ENCODE measurements at regions of chrX and their contacts with region 1.

Region 1: DNA sequence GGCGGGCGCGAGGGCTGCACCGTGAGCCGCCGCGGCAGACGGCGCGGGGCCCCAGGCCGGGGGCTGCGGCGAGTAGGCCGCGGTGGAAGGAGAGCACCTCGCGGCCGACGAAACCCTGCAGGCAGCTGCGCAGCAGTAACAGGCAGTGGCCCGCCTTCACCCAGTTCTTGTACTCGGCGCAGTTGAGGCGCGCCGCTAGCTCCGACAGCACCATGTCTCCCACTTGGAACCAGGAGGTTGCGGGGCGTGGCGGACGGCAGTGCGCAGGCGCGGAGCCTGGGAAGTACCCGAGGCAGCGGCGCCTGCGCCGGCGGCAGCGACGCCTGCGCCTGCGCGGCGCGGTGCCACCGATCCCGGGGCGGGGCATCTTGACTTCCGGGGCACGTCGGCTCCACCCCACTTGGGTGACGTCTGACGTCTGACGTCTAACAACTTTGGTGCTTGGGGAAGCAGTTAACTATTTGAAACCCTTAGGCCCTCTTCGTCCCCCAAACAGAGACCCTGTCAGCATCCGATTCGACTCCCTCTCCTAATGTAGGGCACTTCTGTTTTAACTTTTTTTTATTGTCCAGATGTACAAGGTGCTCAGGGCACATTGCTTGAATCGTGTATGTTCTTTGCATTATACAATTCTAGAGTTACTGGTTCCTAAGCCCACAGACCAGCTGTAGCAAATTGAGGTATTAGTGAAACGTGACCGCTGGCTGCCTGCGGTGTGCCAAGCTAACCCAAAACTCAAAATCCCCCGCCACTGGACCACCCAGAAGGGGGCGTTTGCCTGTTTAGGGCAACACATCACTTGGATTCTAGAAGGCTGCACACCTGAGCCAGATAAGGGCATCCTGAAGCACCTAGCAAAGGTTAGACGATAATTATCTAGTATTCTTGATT is at the start of gene CXorf38:
- DNase-seq: peak; percentile 80 to 96
- H3K4me3 ChIP-seq: peak within 1 kb of the TSS; percentile 77 to 90
- H3K27ac ChIP-seq: peak within 1 kb of the TSS; percentile 75 to 85
- H3K4me1 ChIP-seq: peaks cover 0 to 18% of the 10 kb centered on the region in 2 donors
- H3K27me3 ChIP-seq: no peaks in the 10 kb centered on the region
- CTCF ChIP-seq: no peak
- total RNA-seq, gene CXorf38: 11.9 TPM

Region 2: GRCh38 chrX:40484408-40485091 is 163.0 kb before region 1 on chrX:
- intact Hi-C with region 1: no loop called
- DNase-seq: no peak
- H3K4me3 ChIP-seq: no peak overlapping the region
- H3K27ac ChIP-seq: no peak overlapping the region
- H3K4me1 ChIP-seq: no peaks in the 10 kb centered on the region
- H3K27me3 ChIP-seq: no peaks in the 10 kb centered on the region
- CTCF ChIP-seq: no peak

Region 3: GRCh38 chrX:40539214-40540142 is 108.1 kb before region 1 on chrX:
- intact Hi-C with region 1: loop called (anchors 10 kb)
- DNase-seq: peak in 1 of 2 donors; percentile 72
- H3K4me3 ChIP-seq: no peak overlapping the region
- H3K27ac ChIP-seq: no peak overlapping the region
- H3K4me1 ChIP-seq: no peaks in the 10 kb centered on the region
- H3K27me3 ChIP-seq: no peaks in the 10 kb centered on the region
- CTCF ChIP-seq: no peak

Region 4: GRCh38 chrX:40622479-40623138 is 24.9 kb before region 1 on chrX:
- intact Hi-C with region 1: no loop called
- DNase-seq: no peak
- H3K4me3 ChIP-seq: no peak overlapping the region
- H3K27ac ChIP-seq: no peak overlapping the region
- H3K4me1 ChIP-seq: no peaks in the 10 kb centered on the region
- H3K27me3 ChIP-seq: no peaks in the 10 kb centered on the region
- CTCF ChIP-seq: no peak

Region 5: GRCh38 chrX:40685362-40685918 is 37.9 kb after region 1 on chrX:
- intact Hi-C with region 1: no loop called
- DNase-seq: no peak
- H3K4me3 ChIP-seq: no peak overlapping the region
- H3K27ac ChIP-seq: no peak overlapping the region
- H3K4me1 ChIP-seq: no peaks in the 10 kb centered on the region
- H3K27me3 ChIP-seq: no peaks in the 10 kb centered on the region
- CTCF ChIP-seq: no peak

Region 6: GRCh38 chrX:40735325-40736169 is 88.0 kb after region 1 on chrX and contains the start of gene MED14:
- intact Hi-C with region 1: loop called (anchors 2 kb)
- DNase-seq: peak; percentile 79 to 93
- H3K4me3 ChIP-seq: peak within 1 kb of the TSS; percentile 77 to 96
- H3K27ac ChIP-seq: peak within 1 kb of the TSS; percentile 84 to 94
- H3K4me1 ChIP-seq: no peaks in the 10 kb centered on the region
- H3K27me3 ChIP-seq: no peaks in the 10 kb centered on the region
- CTCF ChIP-seq: peak; percentile 37 to 52 (median 46)
- total RNA-seq, gene MED14: 10.5 TPM

Region 7: GRCh38 chrX:41084044-41084892 is 436.7 kb after region 1 on chrX:
- intact Hi-C with region 1: loop called (anchors 2 kb)
- DNase-seq: peak; percentile 94 to 99
- H3K4me3 ChIP-seq: peak overlapping the region; percentile 82 to 84
- H3K27ac ChIP-seq: peak overlapping the region; percentile 95 to 99
- H3K4me1 ChIP-seq: peaks cover 0 to 17% of the 10 kb centered on the region in 2 donors
- H3K27me3 ChIP-seq: no peaks in the 10 kb centered on the region
- CTCF ChIP-seq: no peak

Region 8: DNA sequence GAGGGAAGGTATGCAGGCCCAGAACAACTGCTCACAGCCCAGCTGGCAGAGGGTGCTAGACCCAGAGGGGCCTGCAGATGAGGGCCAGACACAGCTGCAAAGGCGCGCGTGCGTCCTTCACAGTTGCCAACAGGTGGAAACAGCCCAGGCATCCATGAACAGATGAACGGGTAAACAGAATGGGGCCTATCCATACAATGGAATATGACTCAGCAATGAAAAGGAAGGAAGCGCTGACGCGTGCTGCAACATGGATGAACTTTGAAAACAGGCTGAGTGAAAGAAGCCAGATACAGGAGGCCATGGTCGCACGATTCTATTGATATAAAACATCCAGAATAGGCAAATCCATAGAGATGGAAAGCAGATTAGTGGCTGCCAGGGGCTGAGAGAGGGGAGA is 603.3 kb after region 1 on chrX:
- intact Hi-C with region 1: loop called (anchors 5 kb)
- DNase-seq: peak in 1 of 2 donors; percentile 18
- H3K4me3 ChIP-seq: no peak overlapping the region
- H3K27ac ChIP-seq: no peak overlapping the region
- H3K4me1 ChIP-seq: no peaks in the 10 kb centered on the region
- H3K27me3 ChIP-seq: no peaks in the 10 kb centered on the region
- CTCF ChIP-seq: no peak

Region 9: DNA sequence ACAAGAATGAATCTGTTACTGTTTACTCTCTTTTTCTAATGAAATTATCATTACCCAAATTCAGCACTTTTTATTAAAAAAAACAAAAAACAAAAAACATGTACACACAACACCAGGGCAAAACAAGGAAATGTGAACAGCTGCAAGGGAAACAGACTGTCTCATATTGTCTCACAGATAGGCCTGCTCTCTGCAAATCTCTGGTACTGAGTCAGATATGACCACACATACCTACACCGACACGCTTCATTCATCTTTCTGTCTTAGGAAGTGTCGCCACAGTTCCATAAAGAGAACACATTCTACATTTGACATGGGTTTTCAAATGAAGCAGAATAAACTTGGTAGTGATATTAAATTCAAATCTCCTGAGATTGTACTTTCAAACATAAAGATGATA is 949.0 kb after region 1 on chrX:
- intact Hi-C with region 1: no loop called
- DNase-seq: no peak
- H3K4me3 ChIP-seq: no peak overlapping the region
- H3K27ac ChIP-seq: no peak overlapping the region
- H3K4me1 ChIP-seq: no peaks in the 10 kb centered on the region
- H3K27me3 ChIP-seq: no peaks in the 10 kb centered on the region
- CTCF ChIP-seq: no peak

Measured in ascending aorta (tissue), 2 donors.